ENCODE measurements at regions of chr3 and their contacts with region 1.

Region 1: GRCh38 chr3:165805946-165806561 is 31.2 kb downstream of the BCHE start:
- DNase-seq: no peak
- ATAC-seq: peak; percentile 61
- H3K4me3 ChIP-seq: peak overlapping the region; percentile 61
- H3K27ac ChIP-seq: no peak overlapping the region; the same call in 1 of the 2 replicates
- H3K4me1 ChIP-seq: no peaks in the 10 kb centered on the region
- H3K27me3 ChIP-seq: no peaks in the 10 kb centered on the region
- CTCF ChIP-seq: no peak
- EP300 ChIP-seq: no peak
- POLR2A ChIP-seq: no peak
- RAD21 ChIP-seq: no peak

Region 2: DNA sequence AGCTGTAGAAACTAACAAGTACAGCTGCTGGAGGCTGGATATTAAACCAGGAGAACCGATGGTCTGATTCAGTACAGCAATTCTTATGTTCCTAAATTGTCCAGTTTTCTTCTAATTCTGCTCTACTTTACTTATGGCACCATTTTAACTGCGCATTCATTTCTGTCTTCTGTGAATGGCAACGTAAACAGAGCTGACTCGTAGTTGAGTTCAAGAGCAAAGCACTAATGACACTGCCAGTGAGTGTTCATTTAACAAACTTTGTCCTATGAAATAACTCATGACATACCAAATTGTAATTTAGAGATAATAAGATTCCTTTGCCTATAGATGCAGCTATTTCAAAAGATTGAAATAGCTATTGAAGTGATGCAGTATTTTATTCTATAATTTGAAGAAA is 17.5 kb before region 1 on chr3:
- CTCF ChIA-PET with region 1: interaction called, 7 read pairs
- POLR2A ChIA-PET with region 1: interaction called, 11 read pairs
- RAD21 ChIA-PET with region 1: interaction called, 67 read pairs
- SMC1A ChIA-PET with region 1: interaction called, 104 read pairs
- in situ Hi-C with region 1: no loop called
- intact Hi-C with region 1: no loop called
- DNase-seq: no peak
- ATAC-seq: peak; percentile 67
- H3K4me3 ChIP-seq: no peak overlapping the region
- H3K27ac ChIP-seq: no peak overlapping the region
- H3K4me1 ChIP-seq: no peaks in the 10 kb centered on the region
- H3K27me3 ChIP-seq: no peaks in the 10 kb centered on the region
- CTCF ChIP-seq: no peak
- EP300 ChIP-seq: no peak
- POLR2A ChIP-seq: no peak
- RAD21 ChIP-seq: no peak

Region 3: GRCh38 chr3:165820671-165821123 is 14.6 kb after region 1 on chr3:
- CTCF ChIA-PET with region 1: no interaction called
- POLR2A ChIA-PET with region 1: interaction called, 8 read pairs
- RAD21 ChIA-PET with region 1: interaction called, 98 read pairs
- SMC1A ChIA-PET with region 1: interaction called, 40 read pairs
- in situ Hi-C with region 1: no loop called
- intact Hi-C with region 1: no loop called
- DNase-seq: no peak
- ATAC-seq: peak; percentile 44
- H3K4me3 ChIP-seq: no peak overlapping the region
- H3K27ac ChIP-seq: no peak overlapping the region
- H3K4me1 ChIP-seq: no peaks in the 10 kb centered on the region
- H3K27me3 ChIP-seq: no peaks in the 10 kb centered on the region
- CTCF ChIP-seq: no peak
- EP300 ChIP-seq: peak; percentile 60 to 64; a peak in 2 of 4 replicates
- POLR2A ChIP-seq: no peak
- RAD21 ChIP-seq: no peak

Region 4: GRCh38 chr3:165827883-165828282 is 21.8 kb after region 1 on chr3:
- CTCF ChIA-PET with region 1: no interaction called
- POLR2A ChIA-PET with region 1: interaction called, 4 read pairs
- RAD21 ChIA-PET with region 1: interaction called, 98 read pairs
- SMC1A ChIA-PET with region 1: interaction called, 40 read pairs
- in situ Hi-C with region 1: no loop called
- intact Hi-C with region 1: no loop called
- DNase-seq: no peak
- ATAC-seq: peak; percentile 45
- H3K4me3 ChIP-seq: no peak overlapping the region
- H3K27ac ChIP-seq: no peak overlapping the region
- H3K4me1 ChIP-seq: no peaks in the 10 kb centered on the region
- H3K27me3 ChIP-seq: no peaks in the 10 kb centered on the region
- CTCF ChIP-seq: no peak
- EP300 ChIP-seq: no peak; a peak in 1 of 4 replicates
- POLR2A ChIP-seq: no peak
- RAD21 ChIP-seq: no peak

Region 5: DNA sequence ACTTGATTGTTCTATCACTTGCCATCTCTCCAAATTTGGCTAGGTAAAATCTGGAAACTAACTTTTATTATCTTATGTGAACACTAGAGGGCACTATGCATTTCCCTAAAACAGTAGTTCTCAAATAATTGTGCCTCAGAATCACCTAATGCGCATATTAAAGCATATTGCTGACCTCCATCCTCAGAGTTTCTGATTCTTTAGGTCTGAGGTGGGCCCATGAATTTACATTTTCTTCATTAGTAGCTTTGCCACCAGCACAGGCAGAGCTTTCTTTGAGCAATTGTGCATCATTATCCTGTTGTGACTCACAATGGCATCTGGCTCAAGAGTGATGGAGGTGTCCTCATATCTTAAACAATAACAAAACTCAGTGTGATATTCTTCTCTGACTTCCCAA is 48.6 kb after region 1 on chr3:
- CTCF ChIA-PET with region 1: interaction called, 5 read pairs
- POLR2A ChIA-PET with region 1: no interaction called
- RAD21 ChIA-PET with region 1: no interaction called
- SMC1A ChIA-PET with region 1: no interaction called
- in situ Hi-C with region 1: no loop called
- intact Hi-C with region 1: loop called (anchors 1 kb)
- DNase-seq: no peak
- ATAC-seq: peak; percentile 48
- H3K4me3 ChIP-seq: no peak overlapping the region
- H3K27ac ChIP-seq: no peak overlapping the region
- H3K4me1 ChIP-seq: no peaks in the 10 kb centered on the region
- H3K27me3 ChIP-seq: no peaks in the 10 kb centered on the region
- CTCF ChIP-seq: peak; percentile 35 to 50 (median 48); a peak in 4 of 6 replicates
- EP300 ChIP-seq: no peak
- POLR2A ChIP-seq: no peak
- RAD21 ChIP-seq: 0 out of 2 replicates have a peak, but pooled peaks have one; percentile 20